GM12878 (cell line): ENCODE measurements at regions of chr7 and their contacts with region 1.

Region 1: DNA sequence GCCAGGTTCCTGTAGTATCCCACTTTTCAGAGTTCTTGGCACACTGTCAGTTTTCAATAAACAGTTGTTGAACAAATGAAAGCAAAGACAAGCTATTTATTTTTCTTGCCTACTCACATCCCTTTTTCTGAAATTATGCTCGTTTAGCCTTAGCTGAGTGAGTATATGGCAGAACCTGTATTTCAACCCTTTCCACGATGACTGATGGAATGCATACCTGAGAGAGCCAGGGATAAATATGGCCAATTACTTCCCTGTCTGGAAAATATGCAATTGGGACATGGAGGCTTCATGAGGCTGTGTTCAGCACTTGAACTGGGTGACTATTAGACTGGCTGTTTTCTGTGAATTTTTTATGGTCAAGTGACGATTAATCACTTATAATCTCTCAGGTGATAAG is 144.5 kb upstream of the POT1 start:
- DNase-seq: no peak
- ATAC-seq: no peak
- H3K4me3 ChIP-seq: no peak overlapping the region
- H3K27ac ChIP-seq: no peak overlapping the region
- H3K4me1 ChIP-seq: no peaks in the 10 kb centered on the region
- H3K27me3 ChIP-seq: no peaks in the 10 kb centered on the region
- CTCF ChIP-seq: no peak
- EP300 ChIP-seq: no peak
- POLR2A ChIP-seq: no peak
- RAD21 ChIP-seq: no peak

Region 2: DNA sequence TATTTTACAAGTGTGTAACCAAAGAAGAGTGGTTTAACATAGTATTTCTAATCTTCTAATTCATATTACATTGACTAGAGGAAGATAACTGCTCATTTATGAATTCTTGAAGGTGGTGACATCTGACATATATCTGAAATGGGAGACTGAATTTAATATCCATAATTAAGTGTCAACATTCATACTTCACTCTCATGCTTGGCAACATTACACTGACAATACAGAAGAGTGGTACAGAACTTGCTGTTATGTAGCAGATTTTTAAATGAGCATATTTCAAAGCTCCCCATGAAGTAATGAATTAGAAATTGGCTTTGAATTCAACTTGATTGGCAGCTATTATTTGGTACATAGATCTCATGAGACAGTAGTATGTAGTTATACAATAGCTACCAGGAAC is 18.8 kb before region 1 on chr7:
- CTCF ChIA-PET with region 1: no interaction called
- POLR2A ChIA-PET with region 1: no interaction called
- RAD21 ChIA-PET with region 1: no interaction called
- SMC1A ChIA-PET with region 1: no interaction called
- in situ Hi-C with region 1: no loop called
- intact Hi-C with region 1: loop called (anchors 2 kb)
- DNase-seq: no peak
- ATAC-seq: no peak
- H3K4me3 ChIP-seq: no peak overlapping the region
- H3K27ac ChIP-seq: no peak overlapping the region
- H3K4me1 ChIP-seq: no peaks in the 10 kb centered on the region
- H3K27me3 ChIP-seq: no peaks in the 10 kb centered on the region
- CTCF ChIP-seq: no peak
- EP300 ChIP-seq: no peak
- POLR2A ChIP-seq: no peak
- RAD21 ChIP-seq: no peak

Region 3: DNA sequence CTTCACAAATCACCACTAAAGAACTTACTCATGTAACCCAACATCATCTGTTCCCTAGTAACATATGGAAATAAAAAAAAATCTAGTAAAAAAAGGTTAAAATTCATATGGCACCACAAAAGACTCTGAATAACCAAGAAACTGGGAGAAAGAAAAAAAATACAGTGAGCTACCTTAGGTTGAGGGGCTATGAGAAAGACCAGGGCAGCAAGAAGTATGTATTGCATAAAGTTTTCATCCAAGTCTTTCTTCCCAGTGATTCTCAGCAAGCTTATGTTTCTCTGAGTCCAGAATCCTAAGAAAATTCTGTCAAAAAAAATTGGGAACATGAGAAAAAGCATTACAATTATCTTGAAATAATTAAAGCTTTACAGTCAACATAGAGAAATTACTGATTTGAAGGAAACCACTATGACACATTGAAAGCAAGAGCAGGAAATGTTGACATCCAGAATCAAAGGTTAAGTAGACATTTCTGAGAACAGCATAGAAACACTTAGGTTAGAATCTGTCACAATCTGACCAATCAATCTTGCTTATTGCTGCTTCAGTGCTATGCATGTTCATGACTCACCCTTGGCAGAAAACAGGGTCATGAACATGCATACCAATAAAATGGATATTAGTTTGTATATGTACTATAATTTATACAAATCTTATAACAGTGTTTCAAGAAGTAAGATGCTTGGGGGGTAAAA is 349.5 kb after region 1 on chr7:
- CTCF ChIA-PET with region 1: no interaction called
- POLR2A ChIA-PET with region 1: no interaction called
- RAD21 ChIA-PET with region 1: no interaction called
- SMC1A ChIA-PET with region 1: no interaction called
- in situ Hi-C with region 1: no loop called
- intact Hi-C with region 1: no loop called
- DNase-seq: no peak
- ATAC-seq: peak; percentile 97
- H3K4me3 ChIP-seq: no peak overlapping the region
- H3K27ac ChIP-seq: no peak overlapping the region
- H3K4me1 ChIP-seq: no peaks in the 10 kb centered on the region
- H3K27me3 ChIP-seq: no peaks in the 10 kb centered on the region
- CTCF ChIP-seq: no peak
- EP300 ChIP-seq: no peak
- POLR2A ChIP-seq: no peak
- RAD21 ChIP-seq: no peak

Region 4: DNA sequence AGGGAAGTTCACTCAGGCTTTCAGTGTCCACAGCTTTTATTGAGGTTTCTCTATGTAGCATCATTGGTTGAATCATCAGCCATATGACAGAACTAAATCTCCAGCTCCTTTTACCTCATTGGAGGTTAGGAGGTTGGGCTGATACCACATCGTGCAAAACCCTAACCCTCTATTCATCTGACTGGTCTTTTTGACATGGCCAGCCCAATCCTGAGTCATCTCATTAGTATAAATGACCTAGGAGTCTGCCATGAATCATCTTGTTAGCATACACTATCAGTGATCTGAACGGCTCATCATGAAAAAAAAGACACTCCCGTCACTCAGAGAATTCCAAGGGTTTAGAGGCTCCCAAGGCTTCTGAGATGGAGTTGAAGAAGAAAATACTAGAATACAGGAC is 525.2 kb after region 1 on chr7:
- CTCF ChIA-PET with region 1: no interaction called
- POLR2A ChIA-PET with region 1: no interaction called
- RAD21 ChIA-PET with region 1: no interaction called
- SMC1A ChIA-PET with region 1: no interaction called
- in situ Hi-C with region 1: no loop called
- intact Hi-C with region 1: no loop called
- DNase-seq: no peak
- ATAC-seq: peak; percentile 28; the same call in 1 of the 3 replicates
- H3K4me3 ChIP-seq: no peak overlapping the region
- H3K27ac ChIP-seq: no peak overlapping the region
- H3K4me1 ChIP-seq: no peaks in the 10 kb centered on the region
- H3K27me3 ChIP-seq: no peaks in the 10 kb centered on the region
- CTCF ChIP-seq: no peak
- EP300 ChIP-seq: no peak
- POLR2A ChIP-seq: no peak
- RAD21 ChIP-seq: no peak